ENCODE measurements at regions of chr2 and their contacts with region 1.

Region 1: GRCh38 chr2:131154071-131154531 is 49.0 kb downstream of the PLEKHB2 start:
- DNase-seq: peak; percentile 58
- H3K4me3 Mint-ChIP-seq: no peak overlapping the region
- H3K27ac Mint-ChIP-seq: no peak overlapping the region
- H3K4me1 Mint-ChIP-seq: peaks cover 32% of the 10 kb centered on the region
- H3K27me3 Mint-ChIP-seq: no peaks in the 10 kb centered on the region

Region 2: DNA sequence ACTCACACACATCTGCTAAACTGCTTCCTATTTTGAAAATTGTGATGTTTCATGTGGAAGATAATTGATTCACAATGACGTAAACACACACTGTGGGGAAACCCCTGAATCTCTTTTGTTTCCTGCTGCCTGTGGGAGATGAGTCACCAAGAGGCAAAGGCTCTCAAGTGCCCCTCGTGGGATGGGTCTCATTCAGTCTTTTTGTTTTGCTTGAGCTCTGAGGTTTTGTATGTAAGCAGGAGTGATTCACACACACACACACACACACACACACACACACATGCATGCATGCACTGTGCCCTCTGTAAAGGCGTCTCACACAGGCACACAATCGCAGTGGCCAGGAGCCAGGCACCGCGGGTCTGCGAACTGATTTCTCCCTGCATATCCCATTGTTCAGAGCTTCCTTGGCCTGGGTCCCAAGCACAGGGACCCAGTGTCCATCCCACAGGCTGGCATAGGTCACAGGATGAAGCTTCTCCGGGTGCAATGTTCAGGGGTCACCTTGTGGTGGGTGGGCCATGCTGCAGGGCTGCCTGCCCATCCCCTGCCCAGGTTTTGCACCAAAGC is 329.5 kb before region 1 on chr2:
- intact Hi-C with region 1: loop called (anchors 1 kb)
- DNase-seq: peak; percentile 72
- H3K4me3 Mint-ChIP-seq: peak overlapping the region; percentile 63
- H3K27ac Mint-ChIP-seq: peak overlapping the region; percentile 89
- H3K4me1 Mint-ChIP-seq: peaks cover 15% of the 10 kb centered on the region
- H3K27me3 Mint-ChIP-seq: peaks cover 20% of the 10 kb centered on the region

Region 3: GRCh38 chr2:131413148-131413747 is 259.1 kb after region 1 on chr2:
- intact Hi-C with region 1: loop called (anchors 1 kb)
- DNase-seq: no peak
- H3K4me3 Mint-ChIP-seq: no peak overlapping the region
- H3K27ac Mint-ChIP-seq: no peak overlapping the region
- H3K4me1 Mint-ChIP-seq: peaks cover 12% of the 10 kb centered on the region
- H3K27me3 Mint-ChIP-seq: peaks cover 13% of the 10 kb centered on the region

Region 4: DNA sequence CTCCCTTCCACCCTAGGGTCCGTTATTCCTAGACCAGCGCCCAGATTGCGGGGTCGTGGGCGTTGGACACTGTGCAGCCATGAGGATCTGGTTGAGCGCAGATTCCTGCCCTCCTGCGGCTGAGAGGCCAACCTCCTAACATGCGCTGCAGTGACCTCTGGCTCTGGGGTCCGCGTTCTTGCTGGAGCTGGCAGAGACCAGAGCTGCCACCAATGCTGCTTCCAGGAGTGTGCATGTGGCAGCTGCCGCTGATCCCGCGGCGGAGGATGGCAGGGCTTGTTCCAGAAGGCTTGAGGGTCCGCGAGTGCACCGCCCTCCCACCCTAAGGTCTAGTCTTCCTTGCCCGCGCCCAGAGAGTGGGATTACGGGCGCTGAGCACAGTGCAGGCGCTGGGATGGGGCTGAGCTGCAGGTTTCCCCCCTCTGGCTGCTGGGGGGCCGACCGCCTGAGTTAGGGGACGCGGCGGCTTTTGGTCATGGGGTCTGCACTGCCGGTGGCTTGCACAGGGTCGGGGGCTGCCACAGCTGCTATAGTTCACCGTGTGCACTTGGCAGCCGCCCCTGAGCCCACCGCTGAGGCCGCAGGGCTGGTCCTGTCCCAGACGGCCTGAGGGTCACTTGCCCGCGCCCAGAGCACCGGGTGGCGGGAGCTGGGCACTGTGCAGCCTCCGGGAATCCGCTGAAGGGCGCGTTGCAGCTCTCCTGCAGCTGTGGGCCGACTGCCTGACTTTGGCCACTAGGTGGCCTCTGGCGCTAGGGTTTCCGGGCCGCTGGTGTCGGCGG is 519.5 kb after region 1 on chr2:
- intact Hi-C with region 1: loop called (anchors 1 kb)
- DNase-seq: peak; percentile 56
- H3K4me3 Mint-ChIP-seq: no peak overlapping the region
- H3K27ac Mint-ChIP-seq: no peak overlapping the region
- H3K4me1 Mint-ChIP-seq: peaks cover 5% of the 10 kb centered on the region
- H3K27me3 Mint-ChIP-seq: peaks cover 44% of the 10 kb centered on the region

Region 5: GRCh38 chr2:131801210-131801744 is 647.2 kb after region 1 on chr2:
- intact Hi-C with region 1: loop called (anchors 2 kb)
- DNase-seq: no peak
- H3K4me3 Mint-ChIP-seq: no peak overlapping the region
- H3K27ac Mint-ChIP-seq: no peak overlapping the region
- H3K4me1 Mint-ChIP-seq: no peaks in the 10 kb centered on the region
- H3K27me3 Mint-ChIP-seq: peaks cover 7% of the 10 kb centered on the region